Activated naive CD4-positive, alpha-beta T cell treated with anti-CD3 and anti-CD28 coated beads for 36 hours (primary cell): ENCODE measurements at regions of chrX and their contacts with region 1.

Region 1: GRCh38 chrX:136711147-136711546 is 63.2 kb downstream of the CD40LG start:
- DNase-seq: peak; percentile 56
- H3K4me3 Mint-ChIP-seq: no peak overlapping the region
- H3K27ac Mint-ChIP-seq: peak overlapping the region; percentile 95
- H3K4me1 Mint-ChIP-seq: peaks cover 74% of the 10 kb centered on the region
- H3K27me3 Mint-ChIP-seq: no peaks in the 10 kb centered on the region

Region 2: DNA sequence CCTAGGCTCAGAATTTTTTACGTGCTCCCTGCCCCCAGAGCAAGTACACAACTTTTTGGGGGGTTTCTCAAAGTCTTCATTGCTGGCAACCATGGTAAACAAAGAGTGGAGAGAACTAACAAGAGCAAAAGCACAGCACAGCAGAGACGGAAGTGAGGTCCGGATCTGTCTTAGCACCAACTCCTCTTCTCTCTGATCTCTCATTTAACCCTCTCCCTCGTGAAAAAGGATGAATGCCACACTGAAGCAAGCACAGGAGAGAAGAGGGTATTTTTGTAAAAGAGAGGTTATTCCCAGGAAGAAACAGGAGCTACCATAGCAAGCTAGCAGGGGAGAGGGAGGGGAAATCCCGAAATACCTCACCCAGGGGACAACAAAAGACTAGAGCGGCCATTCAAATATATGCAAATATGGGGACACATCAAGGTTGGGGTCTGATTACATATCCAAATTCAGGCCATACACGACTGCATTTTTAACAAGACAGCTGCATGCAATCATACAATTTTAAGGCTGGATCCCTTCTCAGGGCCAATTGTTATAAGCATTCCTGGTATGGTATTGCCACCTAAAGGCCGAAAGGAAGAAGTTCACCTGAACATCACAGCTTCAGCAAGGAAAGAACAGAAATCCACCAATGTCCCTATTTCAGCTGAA is 16.6 kb before region 1 on chrX:
- CTCF ChIA-PET with region 1: interaction called, 6 read pairs
- intact Hi-C with region 1: loop called (anchors 1 kb)
- DNase-seq: peak; percentile 45
- H3K4me3 Mint-ChIP-seq: peak overlapping the region; percentile 76
- H3K27ac Mint-ChIP-seq: peak overlapping the region; percentile 99
- H3K4me1 Mint-ChIP-seq: peaks cover 73% of the 10 kb centered on the region
- H3K27me3 Mint-ChIP-seq: no peaks in the 10 kb centered on the region

Region 3: DNA sequence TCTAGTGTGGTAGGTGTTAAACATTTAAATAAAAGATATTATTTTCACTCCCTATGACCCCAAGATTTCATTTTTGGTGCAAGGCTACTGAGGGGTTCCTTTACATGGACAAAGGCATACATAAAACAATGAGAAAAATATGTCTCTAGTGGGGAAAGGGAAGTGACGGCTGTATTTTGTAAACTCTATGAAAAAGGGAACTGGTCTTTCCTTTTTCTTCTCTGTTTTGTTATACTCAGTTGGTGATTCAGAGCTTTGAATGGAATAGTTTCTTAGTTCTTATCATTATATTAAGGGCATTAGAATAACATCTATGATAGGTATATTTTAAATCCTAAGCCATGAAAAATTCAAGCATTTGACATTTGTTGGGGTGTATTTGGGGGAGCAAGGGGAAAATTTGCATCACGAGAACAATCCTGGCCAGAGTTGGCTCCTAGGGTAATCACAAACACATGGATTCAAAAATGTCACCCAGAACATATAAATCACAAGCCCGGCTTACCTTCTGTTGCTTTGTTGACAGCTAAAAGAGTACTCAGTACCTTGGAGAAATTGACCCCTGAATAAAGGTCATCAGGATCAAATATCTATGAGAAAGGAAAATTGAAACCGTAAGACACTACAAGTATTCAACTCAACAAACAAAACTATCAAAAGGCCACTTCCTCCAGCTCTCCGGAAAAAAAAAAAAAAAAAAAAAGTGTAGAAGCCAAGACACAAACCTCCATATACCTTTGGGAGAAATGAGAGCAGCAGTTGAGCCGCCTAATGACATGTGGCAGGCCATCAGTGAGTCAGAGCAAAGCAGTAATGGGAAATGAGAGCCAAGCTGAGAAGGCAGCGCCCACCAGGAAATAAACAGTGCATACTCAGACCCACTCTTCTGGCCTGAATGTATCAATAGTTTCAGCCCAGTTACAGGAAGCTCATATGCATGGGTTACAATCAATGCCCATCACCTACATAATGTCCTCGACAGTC is 36.1 kb after region 1 on chrX:
- CTCF ChIA-PET with region 1: interaction called, 3 read pairs
- intact Hi-C with region 1: loop called (anchors 1 kb)
- DNase-seq: peak; percentile 62
- H3K4me3 Mint-ChIP-seq: peak overlapping the region; percentile 46
- H3K27ac Mint-ChIP-seq: peak overlapping the region; percentile 91
- H3K4me1 Mint-ChIP-seq: peaks cover 90% of the 10 kb centered on the region
- H3K27me3 Mint-ChIP-seq: no peaks in the 10 kb centered on the region

Region 4: DNA sequence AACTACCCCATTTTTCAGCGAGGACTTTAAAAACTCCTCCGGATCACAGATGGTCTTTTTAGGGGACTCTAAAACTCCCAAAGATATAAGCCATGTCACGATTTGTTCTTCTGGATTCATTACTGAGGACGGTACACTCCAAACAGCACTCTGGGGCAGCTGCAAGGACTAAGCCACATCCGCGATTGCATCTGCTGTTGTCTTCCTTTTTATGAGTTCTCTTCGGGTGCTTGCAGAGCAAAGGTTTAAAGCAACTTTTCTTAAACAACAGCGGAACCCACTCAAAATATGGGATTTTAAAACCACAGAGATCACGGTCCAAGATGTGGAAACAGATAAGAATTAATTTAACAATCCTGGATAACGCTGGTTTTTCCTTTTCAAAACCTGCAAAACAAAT is 69.6 kb after region 1 on chrX and contains the start of gene ARHGEF6:
- CTCF ChIA-PET with region 1: interaction called, 4 read pairs
- intact Hi-C with region 1: loop called (anchors 2 kb)
- DNase-seq: peak; percentile 54
- H3K4me3 Mint-ChIP-seq: peak within 1 kb of the TSS; percentile 90
- H3K27ac Mint-ChIP-seq: peak within 1 kb of the TSS; percentile 99
- H3K4me1 Mint-ChIP-seq: peaks cover 49% of the 10 kb centered on the region
- H3K27me3 Mint-ChIP-seq: no peaks in the 10 kb centered on the region
- total RNA-seq, gene ARHGEF6: 56.1 to 58.5 TPM

Region 5: DNA sequence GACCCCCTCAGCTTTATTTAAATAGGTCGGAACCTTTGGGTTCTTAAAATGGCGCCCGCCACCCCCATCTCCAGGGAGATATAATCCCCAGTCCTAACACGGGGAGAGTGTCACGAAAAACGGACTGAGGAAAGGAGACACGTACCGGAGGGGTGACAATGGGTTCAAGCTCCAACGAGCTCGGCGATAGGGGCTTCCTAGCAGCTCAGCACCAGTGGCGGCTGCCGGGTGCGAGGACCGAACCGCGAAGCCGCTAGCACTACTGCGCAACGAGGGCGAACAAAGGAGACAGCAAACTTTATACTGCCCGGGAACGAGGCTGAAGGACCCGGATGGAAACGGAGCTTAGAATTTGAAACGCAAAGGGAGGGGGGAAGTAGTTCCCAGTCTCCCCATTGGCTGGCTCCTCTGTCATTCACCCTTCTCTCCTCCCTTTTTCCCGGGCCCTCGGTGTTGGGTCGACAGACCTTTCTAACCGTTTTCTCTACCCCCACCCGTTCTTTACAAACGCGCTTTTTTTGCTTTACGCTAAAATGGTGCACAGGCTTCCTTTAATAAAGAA is 169.4 kb after region 1 on chrX and contains the start of gene RBMX:
- CTCF ChIA-PET with region 1: interaction called, 3 read pairs
- intact Hi-C with region 1: loop called (anchors 1 kb)
- DNase-seq: peak; percentile 94
- H3K4me3 Mint-ChIP-seq: peak within 1 kb of the TSS; percentile 97
- H3K27ac Mint-ChIP-seq: peak within 1 kb of the TSS; percentile 98
- H3K4me1 Mint-ChIP-seq: peaks cover 24% of the 10 kb centered on the region
- H3K27me3 Mint-ChIP-seq: no peaks in the 10 kb centered on the region
- total RNA-seq, gene RBMX: 278 to 280 TPM

Region 6: DNA sequence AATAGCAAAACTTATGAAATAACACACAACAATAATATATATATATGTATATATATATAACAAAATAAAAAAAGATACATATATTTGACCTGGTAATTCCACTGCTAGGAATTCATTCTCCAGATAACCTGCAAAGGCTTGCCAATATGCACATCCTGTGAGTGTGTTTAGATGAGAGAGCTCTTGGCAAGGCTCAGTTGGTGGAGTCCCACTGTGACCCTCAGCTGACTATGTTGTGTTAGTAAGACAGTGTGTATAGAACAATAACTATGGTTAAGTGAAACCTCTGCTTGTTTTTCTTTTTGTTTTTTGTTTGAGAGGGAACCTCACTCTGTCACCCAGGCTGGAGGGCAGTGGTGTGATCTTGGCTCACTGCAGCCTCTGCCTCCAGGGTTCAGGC is 208.9 kb after region 1 on chrX:
- CTCF ChIA-PET with region 1: interaction called, 4 read pairs
- intact Hi-C with region 1: loop called (anchors 1 kb)
- DNase-seq: no peak
- H3K4me3 Mint-ChIP-seq: no peak overlapping the region
- H3K27ac Mint-ChIP-seq: no peak overlapping the region
- H3K4me1 Mint-ChIP-seq: peaks cover 2% of the 10 kb centered on the region
- H3K27me3 Mint-ChIP-seq: no peaks in the 10 kb centered on the region